HEK293T (cell line): ENCODE measurements at regions of chr5 and their contacts with region 1.

Region 1: DNA sequence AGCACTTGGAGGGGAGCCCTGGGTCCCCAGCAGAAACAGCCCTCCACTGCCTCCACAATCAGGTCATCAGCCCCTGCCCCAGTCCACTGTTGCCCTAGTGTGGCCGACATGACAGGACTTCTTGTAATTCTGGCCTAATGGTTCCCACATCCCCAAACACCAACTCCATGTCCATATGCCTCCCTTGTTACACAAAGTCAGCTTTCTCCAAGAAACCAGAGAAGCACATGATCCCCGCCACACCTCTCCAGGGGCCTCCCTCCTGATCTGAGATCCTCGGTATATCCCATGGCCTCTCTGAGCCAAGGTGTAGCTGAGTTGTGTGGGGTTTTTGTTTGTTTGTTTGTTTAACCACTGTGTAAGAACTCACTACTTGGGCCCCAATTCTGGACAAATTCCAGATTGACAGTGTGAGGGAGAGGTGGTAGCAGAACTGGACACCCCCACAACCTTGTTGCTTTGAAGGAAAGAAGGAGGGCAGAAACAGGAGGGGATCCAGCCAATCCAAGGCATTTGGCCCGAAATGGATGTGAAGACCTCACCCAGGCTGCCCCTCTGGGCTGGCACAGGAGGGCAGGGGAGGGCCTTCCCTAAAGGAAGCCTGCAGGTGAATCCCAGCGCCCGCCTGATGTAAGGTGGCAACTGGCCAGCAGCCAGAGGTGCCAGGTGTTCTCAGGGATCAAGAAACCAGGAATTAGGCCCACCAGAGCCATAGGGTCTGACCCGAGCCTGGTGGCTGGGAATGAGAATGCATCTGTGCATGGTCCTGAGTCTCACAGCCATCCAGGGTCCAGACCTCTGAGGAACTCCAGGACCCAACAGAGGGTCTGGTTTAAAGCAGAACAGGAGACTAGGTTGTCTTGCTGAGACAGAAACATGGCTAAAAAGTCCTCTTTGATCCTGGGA is 13.4 kb downstream of the IRF1 start:
- DNase-seq: no peak

Region 2: GRCh38 chr5:132490486-132491367 is 13.6 kb after region 1 on chr5 and contains the start of gene IRF1:
- CTCF ChIA-PET with region 1: interaction called, 3 read pairs
- POLR2A ChIA-PET with region 1: interaction called, 33 read pairs
- DNase-seq: peak; percentile 95